Activated CD8-positive, alpha-beta T cell treated with anti-CD3 and anti-CD28 coated beads, Interleukin-2, amount 10 ng/mL, durations not matched to agents 7 days and 5 days (primary cell): ENCODE measurements at regions of chr6 and their contacts with region 1.

Region 1: DNA sequence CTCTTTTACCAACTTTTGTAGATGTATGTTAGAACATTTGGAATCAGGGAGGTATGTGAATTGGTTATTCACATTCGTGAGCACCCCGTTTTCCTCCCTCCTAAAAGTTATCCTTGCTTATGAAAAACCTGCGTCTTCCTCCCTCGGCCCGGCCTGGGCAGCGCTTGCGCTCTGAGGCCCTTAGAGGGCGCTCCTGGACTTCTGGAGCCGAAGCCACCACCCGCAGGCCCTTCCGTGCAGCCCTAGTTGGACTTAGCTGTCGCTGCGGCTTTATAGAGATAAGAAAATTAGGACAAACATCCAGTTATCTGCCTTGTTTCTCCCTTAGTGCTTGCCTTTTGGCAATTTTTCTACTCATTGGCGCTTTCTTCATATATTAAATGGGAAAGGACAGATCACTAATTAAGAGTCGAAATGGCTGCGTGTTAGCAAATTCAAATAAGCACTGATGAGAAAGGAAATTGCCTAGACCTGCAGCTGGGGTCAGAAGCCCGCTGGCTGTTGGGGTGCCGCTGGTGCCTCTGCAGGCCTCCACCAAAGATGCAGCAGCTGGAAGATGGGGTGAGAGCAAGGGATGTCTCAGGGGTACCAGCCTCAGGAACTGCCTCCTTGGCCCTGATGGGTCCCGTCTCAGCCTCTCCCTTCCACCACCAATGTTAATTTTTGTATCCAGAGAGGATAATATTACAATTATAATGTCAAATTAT is 5.2 kb downstream of the FNDC1 start:
- DNase-seq: peak; percentile 80
- ATAC-seq: peak; percentile 86
- H3K4me3 Mint-ChIP-seq: no peak overlapping the region
- H3K27ac Mint-ChIP-seq: no peak overlapping the region
- H3K4me1 Mint-ChIP-seq: peaks cover 6% of the 10 kb centered on the region
- H3K27me3 Mint-ChIP-seq: peaks cover 43% of the 10 kb centered on the region

Region 2: GRCh38 chr6:159184559-159184958 is 10.1 kb after region 1 on chr6:
- CTCF ChIA-PET with region 1: interaction called, 19 read pairs
- POLR2A ChIA-PET with region 1: no interaction called
- DNase-seq: no peak
- ATAC-seq: no peak
- H3K4me3 Mint-ChIP-seq: no peak overlapping the region
- H3K27ac Mint-ChIP-seq: no peak overlapping the region
- H3K4me1 Mint-ChIP-seq: peaks cover 14% of the 10 kb centered on the region
- H3K27me3 Mint-ChIP-seq: peaks cover 14% of the 10 kb centered on the region

Region 3: DNA sequence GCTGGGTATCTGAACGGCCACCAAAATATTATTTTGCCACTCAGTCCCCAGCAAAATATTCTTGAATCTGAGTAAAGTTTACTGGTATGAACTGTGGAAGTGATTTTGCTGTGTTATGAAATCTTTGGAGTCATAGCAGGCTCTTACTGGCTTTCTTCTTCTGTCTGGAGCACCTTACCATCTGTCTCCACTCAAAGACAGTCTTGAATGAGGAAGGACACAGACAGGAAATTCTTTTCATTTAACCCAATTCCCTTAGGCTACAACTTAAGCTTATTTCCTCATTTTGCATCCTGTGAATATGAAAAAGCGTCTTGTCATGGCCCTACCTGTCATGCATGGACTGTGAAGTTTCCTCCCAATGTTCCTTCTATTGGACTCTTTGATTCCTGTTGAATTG is 19.5 kb after region 1 on chr6:
- CTCF ChIA-PET with region 1: interaction called, 12 read pairs
- POLR2A ChIA-PET with region 1: no interaction called
- DNase-seq: no peak
- ATAC-seq: no peak
- H3K4me3 Mint-ChIP-seq: no peak overlapping the region
- H3K27ac Mint-ChIP-seq: no peak overlapping the region
- H3K4me1 Mint-ChIP-seq: no peaks in the 10 kb centered on the region
- H3K27me3 Mint-ChIP-seq: peaks cover 30% of the 10 kb centered on the region

Region 4: DNA sequence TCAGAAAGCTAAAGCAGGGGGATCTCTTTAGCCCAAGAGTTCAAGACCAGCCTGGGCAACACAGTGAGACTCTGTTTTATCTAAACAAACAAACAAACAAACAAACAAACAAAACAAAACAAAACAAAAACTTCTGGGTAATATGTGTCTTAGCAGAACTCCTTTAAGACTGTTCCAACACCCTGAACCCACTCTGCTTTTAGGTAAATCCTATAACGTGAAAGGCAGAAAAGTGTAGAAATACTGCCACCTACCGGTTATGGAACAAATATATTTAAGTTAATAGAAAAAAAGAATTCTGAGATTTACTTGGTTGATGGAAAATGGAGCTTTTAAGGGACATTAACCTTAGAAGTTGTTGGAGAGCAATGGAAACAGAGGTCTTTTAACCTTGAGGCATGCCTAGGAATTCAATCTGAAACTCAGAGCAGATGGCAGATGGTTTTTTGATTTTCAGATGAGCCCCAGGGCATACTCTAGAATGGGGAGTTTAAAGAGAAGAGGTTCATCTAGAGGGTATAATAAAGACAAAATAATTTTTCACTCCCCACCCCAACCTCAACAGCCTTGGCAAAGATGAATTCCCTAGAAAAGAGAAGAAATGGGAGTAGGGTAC is 480.2 kb after region 1 on chr6:
- CTCF ChIA-PET with region 1: interaction called, 31 read pairs
- POLR2A ChIA-PET with region 1: no interaction called
- DNase-seq: no peak
- ATAC-seq: no peak
- H3K4me3 Mint-ChIP-seq: no peak overlapping the region
- H3K27ac Mint-ChIP-seq: no peak overlapping the region
- H3K4me1 Mint-ChIP-seq: no peaks in the 10 kb centered on the region
- H3K27me3 Mint-ChIP-seq: peaks cover 2% of the 10 kb centered on the region